Left ventricle myocardium superior (tissue), 1 donor: ENCODE measurements at regions of chr17 and their contacts with region 1.

Region 1: GRCh38 chr17:50087246-50087911 is 7.8 kb upstream of the PDK2 start:
- DNase-seq: peak; percentile 83
- ATAC-seq: peak; percentile 88

Region 2: DNA sequence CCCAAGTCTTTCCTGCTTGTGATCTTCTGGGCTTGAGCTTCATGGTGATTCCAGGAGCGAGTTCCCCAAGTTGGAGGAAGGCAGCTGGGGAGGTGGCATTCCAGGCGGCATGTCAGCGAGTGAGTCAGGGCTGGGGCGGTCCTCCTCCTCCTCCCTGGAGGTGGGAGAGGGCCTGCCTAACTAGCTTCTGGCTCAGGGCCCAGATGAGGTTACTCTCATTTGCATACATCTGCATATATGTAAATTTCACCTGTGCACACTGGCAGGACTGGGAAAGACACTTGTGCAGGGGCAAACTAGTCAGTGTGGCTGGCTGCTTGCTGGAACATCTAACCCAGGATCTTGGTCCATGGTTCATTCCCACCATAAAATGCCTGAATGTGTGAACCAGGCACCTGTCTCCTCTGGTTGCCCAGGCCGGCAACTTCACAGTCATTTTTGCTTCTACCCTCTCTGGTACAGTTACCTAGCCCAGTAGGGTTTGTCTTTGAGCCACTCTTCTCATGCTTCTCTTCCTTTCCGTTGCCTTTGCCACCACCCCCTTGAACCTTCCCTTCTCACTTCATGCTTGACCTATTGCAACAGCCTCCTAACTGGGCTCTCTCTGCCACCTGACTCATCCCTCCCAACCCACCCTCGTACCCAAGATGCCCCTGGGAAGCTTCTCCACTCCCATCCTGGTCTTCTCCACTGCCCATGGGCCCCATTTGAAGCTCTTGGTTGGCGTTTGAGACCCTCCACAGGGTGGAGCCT is 128.0 kb before region 1 on chr17:
- intact Hi-C with region 1: no loop called
- DNase-seq: no peak
- ATAC-seq: no peak

Region 3: GRCh38 chr17:50026901-50027630 is 60.3 kb before region 1 on chr17:
- intact Hi-C with region 1: loop called (anchors 2 kb)
- DNase-seq: peak; percentile 90
- ATAC-seq: peak; percentile 88

Region 4: DNA sequence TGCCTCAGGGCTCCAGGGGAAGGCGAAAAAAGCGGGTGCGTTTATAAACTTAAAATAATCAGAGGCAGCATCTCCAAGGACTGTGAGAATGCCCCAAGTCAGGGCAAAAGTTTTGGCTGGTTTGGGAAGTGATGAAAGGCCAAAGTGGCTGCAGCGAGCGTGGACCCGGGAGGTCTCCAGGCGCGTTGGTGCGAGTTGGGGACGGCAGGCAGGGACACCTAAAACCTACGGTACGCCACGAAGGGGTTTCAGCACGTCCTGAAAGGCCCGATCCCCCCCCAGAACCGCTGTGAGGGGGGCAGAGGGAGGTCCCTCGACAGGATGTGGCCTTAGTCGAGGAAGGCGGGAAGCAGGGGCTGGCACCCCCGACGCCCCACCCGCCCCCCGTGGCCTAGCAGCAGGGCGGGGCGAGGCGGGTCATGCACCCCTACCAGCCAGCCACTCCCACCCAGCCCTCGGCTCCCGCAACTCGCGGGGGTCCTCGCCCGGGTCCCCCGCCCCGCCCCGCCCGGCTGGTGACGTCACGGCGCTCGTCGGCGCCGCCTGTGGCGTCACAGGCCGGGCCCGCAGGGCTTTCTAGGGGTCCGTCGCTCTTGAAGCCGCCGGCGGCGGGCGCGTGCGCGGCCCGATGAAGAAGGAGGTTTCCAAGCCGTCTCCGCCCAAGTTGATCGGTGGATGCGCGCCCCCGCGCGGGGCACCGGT is 420.6 kb after region 1 on chr17 and contains the start of gene MYCBPAP:
- intact Hi-C with region 1: no loop called
- DNase-seq: peak; percentile 92
- ATAC-seq: peak; percentile 87
- total RNA-seq, gene MYCBPAP: 0.55 TPM